AG04450 (cell line): ENCODE measurements at regions of chr6 and their contacts with region 1.

Region 1: DNA sequence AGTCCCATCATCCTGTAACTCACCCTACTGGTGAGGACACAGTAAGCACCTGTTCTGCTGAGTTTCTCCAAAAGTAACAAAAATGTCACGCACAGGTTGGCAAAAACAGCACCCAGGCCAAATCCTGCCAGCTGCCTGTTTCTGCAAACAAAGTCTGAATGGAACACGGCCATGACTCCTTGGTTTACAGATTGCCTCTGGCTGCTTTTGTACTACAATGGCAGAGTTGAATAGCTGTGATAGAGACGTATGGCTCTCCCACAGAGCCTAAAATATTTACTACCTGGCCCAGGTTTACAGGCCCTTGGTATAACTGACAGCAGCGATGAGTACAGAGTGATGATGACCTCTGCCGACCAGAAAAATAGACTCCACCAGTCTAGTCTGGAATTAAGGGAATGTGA is 52.6 kb downstream of the CNKSR3 start:
- DNase-seq: no peak
- H3K4me3 ChIP-seq: no peak overlapping the region
- H3K27ac ChIP-seq: no peak overlapping the region
- H3K27me3 ChIP-seq: no peaks in the 10 kb centered on the region
- CTCF ChIP-seq: no peak

Region 2: DNA sequence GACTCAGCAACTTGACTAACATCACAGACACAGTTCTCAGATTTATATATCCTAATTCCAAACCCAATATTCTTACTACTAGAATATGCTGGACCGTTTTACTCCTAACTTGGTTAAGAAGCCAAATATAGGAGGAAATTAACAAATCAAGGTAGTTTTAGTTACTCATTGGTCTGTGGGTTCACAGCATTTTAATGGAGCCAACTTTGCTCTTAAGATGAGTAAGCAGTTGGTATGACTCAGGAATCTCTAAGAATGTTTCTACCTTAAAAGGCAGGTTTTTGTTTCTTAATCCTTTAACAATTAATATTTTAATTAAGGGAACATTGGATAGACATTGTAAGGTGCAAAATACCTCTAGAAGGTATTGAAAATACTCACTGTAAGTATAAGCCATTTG is 387.2 kb before region 1 on chr6:
- CTCF ChIA-PET with region 1: no interaction called
- POLR2A ChIA-PET with region 1: no interaction called
- DNase-seq: no peak
- H3K4me3 ChIP-seq: no peak overlapping the region
- H3K27ac ChIP-seq: no peak overlapping the region
- H3K27me3 ChIP-seq: no peaks in the 10 kb centered on the region
- CTCF ChIP-seq: no peak

Region 3: GRCh38 chr6:154432533-154433476 is 25.1 kb before region 1 on chr6:
- CTCF ChIA-PET with region 1: interaction called, 13 read pairs
- POLR2A ChIA-PET with region 1: no interaction called
- DNase-seq: no peak
- H3K4me3 ChIP-seq: no peak overlapping the region
- H3K27ac ChIP-seq: no peak overlapping the region
- H3K27me3 ChIP-seq: no peaks in the 10 kb centered on the region
- CTCF ChIP-seq: no peak